BJ (cell line): ENCODE measurements at regions of chr6 and their contacts with region 1.

Region 1: GRCh38 chr6:44265007-44265721 is at the start of gene NFKBIE:
- DNase-seq: peak; percentile 60
- H3K4me3 ChIP-seq: peak within 1 kb of the TSS; percentile 74
- H3K27me3 ChIP-seq: peaks cover 19% of the 10 kb centered on the region
- CTCF ChIP-seq: peak; percentile 50
- polyA plus RNA-seq, gene NFKBIE: 6.2 and 8.0 TPM in 2 replicates

Region 2: DNA sequence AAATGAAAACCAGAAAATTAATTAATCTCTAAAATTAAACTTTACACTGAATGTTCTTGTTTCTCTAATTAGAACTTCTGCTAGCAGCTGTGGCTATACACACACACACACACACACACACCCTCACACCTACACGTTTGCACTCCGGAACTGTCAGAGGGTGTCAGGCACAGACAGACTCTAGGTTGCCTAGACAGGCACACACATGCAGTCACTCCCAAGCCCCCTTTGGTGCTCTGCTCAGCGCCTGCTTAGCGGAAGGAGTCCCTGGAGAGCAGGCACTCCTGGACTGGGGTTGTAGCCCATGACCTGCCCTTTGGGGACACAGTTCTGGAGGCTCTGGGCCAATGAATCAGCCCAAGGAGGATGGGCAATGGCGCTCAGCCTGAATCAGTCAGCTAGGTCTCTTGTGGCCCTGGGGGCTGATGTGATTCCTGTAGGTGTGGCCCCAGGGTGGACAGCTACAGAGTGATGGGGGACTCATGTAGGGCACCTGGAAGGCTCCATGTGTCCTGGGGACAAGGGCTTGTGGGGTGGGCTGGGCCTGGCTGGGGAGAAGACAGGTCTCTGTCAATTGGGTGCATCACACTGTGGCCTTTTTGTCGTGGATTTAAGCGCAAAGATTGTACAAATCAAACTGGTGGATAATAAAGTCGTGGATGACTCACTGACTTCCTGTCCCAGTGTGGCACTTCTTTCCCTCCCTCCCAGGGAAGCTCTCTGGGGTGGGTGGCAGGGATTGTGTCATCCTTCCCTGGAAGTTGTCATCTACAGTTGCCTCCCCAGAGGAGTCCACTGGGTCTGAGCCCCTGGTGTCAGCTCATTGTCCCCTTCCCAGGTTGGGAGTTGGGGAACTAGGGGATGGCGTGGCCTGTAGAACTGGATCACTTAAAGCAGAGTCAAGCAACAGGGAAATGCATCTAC is 13.9 kb after region 1 on chr6:
- CTCF ChIA-PET with region 1: interaction called, 16 read pairs
- POLR2A ChIA-PET with region 1: no interaction called
- DNase-seq: no peak
- H3K4me3 ChIP-seq: no peak overlapping the region
- H3K27me3 ChIP-seq: peaks cover 8% of the 10 kb centered on the region
- CTCF ChIP-seq: no peak

Region 3: GRCh38 chr6:44285552-44286284 is 20.6 kb after region 1 on chr6:
- CTCF ChIA-PET with region 1: interaction called, 10 read pairs
- POLR2A ChIA-PET with region 1: no interaction called
- DNase-seq: no peak
- H3K4me3 ChIP-seq: no peak overlapping the region
- H3K27me3 ChIP-seq: peaks cover 21% of the 10 kb centered on the region
- CTCF ChIP-seq: no peak

Region 4: GRCh38 chr6:44297063-44298038 is 32.2 kb after region 1 on chr6:
- CTCF ChIA-PET with region 1: interaction called, 38 read pairs
- POLR2A ChIA-PET with region 1: no interaction called
- DNase-seq: no peak
- H3K4me3 ChIP-seq: peak overlapping the region; percentile 30
- H3K27me3 ChIP-seq: peaks cover 26% of the 10 kb centered on the region
- CTCF ChIP-seq: no peak

Region 5: DNA sequence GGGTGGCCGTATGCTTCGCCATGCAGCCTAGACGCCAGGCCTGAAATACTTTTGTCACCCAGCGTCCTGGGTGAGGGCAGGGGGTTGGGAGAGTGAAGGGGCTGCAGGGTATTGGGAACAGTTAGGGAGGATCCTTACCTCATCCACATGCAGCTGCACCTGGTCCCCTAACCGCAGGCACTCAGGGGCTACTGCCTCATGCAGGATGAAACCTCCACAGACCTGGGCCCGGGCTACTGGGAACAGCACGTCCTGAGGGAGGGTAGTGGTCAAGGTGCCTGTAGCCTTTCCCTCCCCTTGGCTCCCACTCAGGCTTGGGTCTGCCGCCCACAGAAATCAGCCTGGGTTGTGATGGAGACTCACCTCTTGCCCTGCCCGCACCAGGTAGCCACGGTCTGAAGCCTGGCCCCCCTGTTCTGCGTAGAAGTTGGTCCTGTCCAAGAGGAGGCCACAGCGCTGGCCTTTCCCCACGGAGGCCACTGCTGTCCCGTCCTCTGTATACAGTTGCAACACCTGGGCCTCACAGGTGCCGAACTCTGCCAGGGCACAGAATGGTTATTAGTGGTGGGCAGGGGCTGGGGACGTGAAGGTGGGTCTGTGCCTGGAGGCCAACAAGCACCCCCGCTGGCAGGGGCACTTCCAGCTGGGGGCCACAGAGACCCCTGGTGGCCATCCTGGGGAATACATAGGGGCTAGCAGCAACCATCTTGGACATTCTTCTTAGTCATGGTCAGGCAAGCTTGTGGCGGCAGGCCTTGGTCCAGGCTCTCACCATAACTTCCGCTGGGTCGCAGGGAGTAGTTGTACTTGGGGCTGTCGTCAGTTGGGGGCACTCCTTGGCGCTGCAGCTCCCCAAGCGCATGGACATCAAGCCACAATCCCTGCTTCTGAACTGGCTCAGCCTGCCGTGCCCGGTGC is 39.4 kb after region 1 on chr6:
- CTCF ChIA-PET with region 1: interaction called, 38 read pairs
- POLR2A ChIA-PET with region 1: no interaction called
- DNase-seq: no peak
- H3K4me3 ChIP-seq: no peak overlapping the region
- H3K27me3 ChIP-seq: no peaks in the 10 kb centered on the region
- CTCF ChIP-seq: peak; percentile 78

Region 6: GRCh38 chr6:44338228-44339122 is 73.3 kb after region 1 on chr6:
- CTCF ChIA-PET with region 1: interaction called, 138 read pairs
- POLR2A ChIA-PET with region 1: no interaction called
- DNase-seq: no peak
- H3K4me3 ChIP-seq: no peak overlapping the region
- H3K27me3 ChIP-seq: peaks cover 16% of the 10 kb centered on the region
- CTCF ChIP-seq: peak; percentile 71